Stomach (tissue), 19 donors: ENCODE measurements at regions of chr19 and their contacts with region 1.

Region 1: DNA sequence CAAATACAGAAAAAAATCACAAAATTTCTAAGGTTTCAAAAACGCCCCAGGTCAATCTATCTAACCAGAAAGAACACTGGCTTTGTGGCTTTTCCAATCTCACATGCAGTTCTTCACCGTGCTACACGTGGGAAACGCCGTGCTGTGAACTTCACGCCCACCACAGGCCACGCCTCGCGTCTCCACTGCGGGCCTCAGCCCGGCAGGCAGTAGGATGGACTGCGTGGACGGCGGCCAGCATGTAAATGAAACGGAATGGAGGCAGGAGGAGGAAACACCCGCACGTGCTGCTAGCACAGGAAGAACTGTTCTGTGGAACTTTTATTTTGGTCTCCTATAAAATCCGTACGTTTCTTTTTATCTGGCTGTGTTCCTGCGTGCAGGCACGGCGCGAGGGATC is 23.8 kb downstream of the ZNF787 start:
- DNase-seq: no peak
- H3K4me3 ChIP-seq: no peak overlapping the region
- H3K27ac ChIP-seq: no peak overlapping the region
- H3K4me1 ChIP-seq: peaks cover 0 to 20% (median 15%) of the 10 kb centered on the region in 4 donors
- H3K27me3 ChIP-seq: no peaks in the 10 kb centered on the region
- CTCF ChIP-seq: no peak
- EP300 ChIP-seq: no peak
- POLR2A ChIP-seq: no peak

Region 2: DNA sequence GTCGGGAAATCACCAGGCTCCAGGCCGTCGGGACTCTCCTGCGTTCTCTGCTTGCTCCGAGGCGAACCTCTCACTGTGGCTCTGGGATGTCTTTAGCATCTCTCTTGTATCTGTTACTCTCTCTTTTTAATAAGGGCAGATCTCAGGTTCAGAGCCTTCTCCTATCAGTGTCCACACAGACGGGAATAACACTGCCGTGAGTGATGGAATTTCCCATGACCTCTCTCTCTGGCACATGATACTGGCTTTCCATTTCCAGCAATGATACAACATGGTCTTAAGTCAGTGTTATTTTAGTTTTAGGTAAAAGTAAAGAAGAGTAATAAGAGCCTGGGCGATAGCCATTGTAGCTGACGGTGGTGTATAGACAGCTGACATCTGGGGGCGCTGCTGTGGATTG is 53.1 kb after region 1 on chr19:
- intact Hi-C with region 1: no loop called
- DNase-seq: no peak
- H3K4me3 ChIP-seq: no peak overlapping the region
- H3K27ac ChIP-seq: no peak overlapping the region
- H3K4me1 ChIP-seq: peaks cover 0 to 41% (median 16%) of the 10 kb centered on the region in 4 donors
- H3K27me3 ChIP-seq: no peaks in the 10 kb centered on the region
- CTCF ChIP-seq: no peak
- EP300 ChIP-seq: no peak
- POLR2A ChIP-seq: no peak

Region 3: DNA sequence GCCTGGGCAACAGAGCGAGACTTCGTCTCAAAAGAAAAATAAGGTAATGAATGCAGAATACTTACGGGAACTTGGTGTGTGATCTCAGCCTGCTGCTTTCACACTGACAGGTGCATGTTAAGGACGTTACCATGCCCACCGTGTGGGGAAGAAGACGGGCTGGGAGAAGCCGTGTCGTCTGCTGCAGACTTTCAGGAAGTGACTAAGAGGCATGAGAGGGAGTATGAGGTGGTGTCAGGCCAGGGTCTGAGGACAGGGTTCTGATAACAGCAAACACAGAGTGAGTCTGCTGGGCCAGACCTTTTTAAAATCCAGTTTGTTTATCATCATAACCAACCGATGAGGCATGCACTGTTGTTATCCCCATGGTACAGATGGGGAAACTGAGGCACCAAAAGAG is 65.0 kb after region 1 on chr19:
- intact Hi-C with region 1: loop called (anchors 5 kb)
- DNase-seq: no peak
- H3K4me3 ChIP-seq: no peak overlapping the region
- H3K27ac ChIP-seq: no peak overlapping the region
- H3K4me1 ChIP-seq: no peaks in the 10 kb centered on the region
- H3K27me3 ChIP-seq: no peaks in the 10 kb centered on the region
- CTCF ChIP-seq: no peak
- EP300 ChIP-seq: no peak
- POLR2A ChIP-seq: no peak